IMR-90 (cell line): ENCODE measurements at regions of chr17 and their contacts with region 1.

Region 1: DNA sequence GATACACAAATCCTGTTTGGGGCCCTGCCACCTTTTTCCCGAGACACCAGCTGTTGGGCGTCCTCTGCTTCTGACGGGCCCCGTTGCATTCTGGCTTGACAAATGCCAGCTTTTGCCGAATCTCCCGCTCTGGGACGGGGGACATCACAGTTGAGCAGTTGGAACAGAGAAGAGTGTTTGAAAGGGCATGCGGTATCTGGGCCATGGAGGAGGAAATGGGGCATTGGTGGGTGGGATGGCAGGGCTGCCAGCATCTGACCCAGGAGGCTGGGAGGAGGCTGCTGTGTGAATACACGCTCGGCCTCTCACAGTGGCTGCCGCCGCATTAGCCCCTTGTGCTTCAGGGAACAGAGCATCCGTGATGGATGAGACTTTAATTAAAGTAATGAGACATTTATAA is 184.3 kb upstream of the TNRC6C start:
- DNase-seq: no peak
- ATAC-seq: no peak
- H3K4me3 ChIP-seq: no peak overlapping the region
- H3K27ac ChIP-seq: no peak overlapping the region
- H3K4me1 ChIP-seq: no peaks in the 10 kb centered on the region
- H3K27me3 ChIP-seq: peaks cover 25% of the 10 kb centered on the region
- CTCF ChIP-seq: no peak
- POLR2A ChIP-seq: no peak
- RAD21 ChIP-seq: no peak

Region 2: GRCh38 chr17:77859035-77859810 is 85.0 kb after region 1 on chr17:
- CTCF ChIA-PET with region 1: no interaction called
- POLR2A ChIA-PET with region 1: interaction called, 10 read pairs
- dilution Hi-C with region 1: no loop called
- in situ Hi-C with region 1: no loop called
- intact Hi-C with region 1: no loop called
- DNase-seq: no peak
- ATAC-seq: no peak
- H3K4me3 ChIP-seq: no peak overlapping the region
- H3K27ac ChIP-seq: no peak overlapping the region
- H3K4me1 ChIP-seq: no peaks in the 10 kb centered on the region
- H3K27me3 ChIP-seq: peaks cover 28% of the 10 kb centered on the region
- CTCF ChIP-seq: no peak
- POLR2A ChIP-seq: no peak
- RAD21 ChIP-seq: no peak